Tibial artery (tissue), 4 donors: ENCODE measurements at regions of chr3 and their contacts with region 1.

Region 1: GRCh38 chr3:62109534-62109933 is 263.8 kb downstream of the FEZF2 start:
- DNase-seq: peak in 1 of 2 donors; percentile 81
- H3K4me3 ChIP-seq: no peak overlapping the region
- H3K27ac ChIP-seq: peak overlapping the region; percentile 21 to 34
- H3K4me1 ChIP-seq: peaks cover 0 to 14% (median 2%) of the 10 kb centered on the region in 4 donors
- H3K27me3 ChIP-seq: no peaks in the 10 kb centered on the region
- CTCF ChIP-seq: peak in 1 of 2 experiments; percentile 12

Region 2: DNA sequence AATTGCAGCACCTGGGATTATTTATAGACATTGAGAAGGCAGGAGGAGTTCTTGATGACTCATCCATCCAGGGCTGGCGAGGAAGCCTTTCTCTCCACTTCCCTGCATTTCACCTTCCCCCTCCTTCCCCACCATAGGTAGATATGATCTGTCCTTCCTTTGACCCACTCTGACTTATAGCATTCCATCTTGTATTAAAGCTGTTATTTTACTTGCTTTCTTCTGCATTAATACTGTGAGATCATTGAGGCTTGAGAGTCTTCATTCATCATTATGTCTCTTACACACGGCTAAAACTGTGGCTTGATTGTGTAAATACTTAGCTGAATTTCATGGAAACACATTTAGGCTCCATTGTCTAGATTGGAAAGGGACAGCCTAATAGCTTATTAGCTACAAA is 24.9 kb before region 1 on chr3:
- intact Hi-C with region 1: loop called (anchors 1 kb)
- DNase-seq: no peak
- H3K4me3 ChIP-seq: no peak overlapping the region
- H3K27ac ChIP-seq: no peak overlapping the region
- H3K4me1 ChIP-seq: peaks cover 0 to 2% (median 0%) of the 10 kb centered on the region in 4 donors
- H3K27me3 ChIP-seq: no peaks in the 10 kb centered on the region
- CTCF ChIP-seq: no peak

Region 3: DNA sequence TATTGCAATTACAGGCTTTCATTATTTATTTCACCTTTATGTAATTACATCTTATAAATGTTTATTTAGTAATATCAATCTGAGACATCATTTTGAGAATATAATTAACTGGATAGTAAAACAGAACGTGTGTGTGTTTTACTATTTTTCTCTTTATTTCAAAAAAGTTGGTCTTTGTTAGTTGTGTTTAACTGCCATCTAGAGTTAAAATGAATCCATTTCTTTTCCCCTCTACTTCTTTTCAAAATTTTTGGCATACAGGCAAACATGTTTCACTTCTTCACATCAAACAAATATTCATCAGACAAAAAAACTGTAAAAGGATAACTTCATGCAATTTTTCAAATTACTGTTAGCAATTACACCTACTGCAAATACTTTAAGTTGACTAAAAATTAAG is 202.7 kb after region 1 on chr3:
- intact Hi-C with region 1: no loop called
- DNase-seq: no peak
- H3K4me3 ChIP-seq: no peak overlapping the region
- H3K27ac ChIP-seq: no peak overlapping the region
- H3K4me1 ChIP-seq: no peaks in the 10 kb centered on the region
- H3K27me3 ChIP-seq: no peaks in the 10 kb centered on the region
- CTCF ChIP-seq: no peak